ENCODE measurements at regions of chr1 and their contacts with region 1.

Region 1: GRCh38 chr1:26145041-26145959 is 13.6 kb upstream of the FAM110D start:
- DNase-seq: peak; percentile 64 to 78
- ATAC-seq: peak; percentile 99 to 100
- H3K4me3 ChIP-seq: no peak overlapping the region
- H3K27ac ChIP-seq: peak overlapping the region in 2 of 4 donors; percentile 37 to 38
- H3K4me1 ChIP-seq: peaks cover 0 to 9% of the 10 kb centered on the region in 2 donors
- H3K27me3 ChIP-seq: no peaks in the 10 kb centered on the region
- CTCF ChIP-seq: peak; percentile 54 to 93 (median 85)
- POLR2A ChIP-seq: no peak

Region 2: GRCh38 chr1:26102526-26102925 is 42.8 kb before region 1 on chr1:
- in situ Hi-C with region 1: loop called (anchors 5 kb)
- intact Hi-C with region 1: loop called (anchors 1 kb)
- DNase-seq: no peak
- ATAC-seq: no peak
- H3K4me3 ChIP-seq: no peak overlapping the region
- H3K27ac ChIP-seq: no peak overlapping the region
- H3K4me1 ChIP-seq: peaks cover 3 to 12% of the 10 kb centered on the region in 2 donors
- H3K27me3 ChIP-seq: no peaks in the 10 kb centered on the region
- CTCF ChIP-seq: no peak
- POLR2A ChIP-seq: no peak

Region 3: DNA sequence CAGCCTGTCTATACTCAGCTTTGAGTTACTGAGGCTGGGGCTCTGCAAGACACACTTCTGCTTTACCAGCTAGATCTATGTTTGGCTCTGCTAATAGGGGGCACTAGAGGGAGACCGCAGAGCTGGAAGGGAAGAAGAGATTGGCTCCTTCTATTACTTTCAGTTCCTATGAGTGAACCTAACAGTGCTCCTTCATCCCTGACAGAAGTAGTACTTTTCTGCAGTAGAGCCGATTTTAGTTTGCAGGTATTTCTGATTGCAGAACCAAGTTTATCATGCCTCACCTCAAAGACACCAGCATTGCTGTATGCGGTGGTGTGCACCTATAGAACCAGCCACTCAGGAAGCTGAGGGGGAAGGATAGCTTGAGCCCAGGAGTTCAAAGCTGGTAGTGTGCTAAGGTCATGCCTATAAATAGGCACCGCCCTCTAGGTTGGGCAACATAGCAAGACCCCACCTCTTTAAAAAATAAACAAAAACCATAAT is 675.5 kb after region 1 on chr1:
- in situ Hi-C with region 1: no loop called
- intact Hi-C with region 1: no loop called
- DNase-seq: no peak
- ATAC-seq: no peak
- H3K4me3 ChIP-seq: no peak overlapping the region
- H3K27ac ChIP-seq: no peak overlapping the region
- H3K4me1 ChIP-seq: peaks cover 0 to 2% of the 10 kb centered on the region in 2 donors
- H3K27me3 ChIP-seq: no peaks in the 10 kb centered on the region
- CTCF ChIP-seq: no peak
- POLR2A ChIP-seq: no peak